ENCODE measurements at regions of chr6 and their contacts with region 1.

Region 1: GRCh38 chr6:25017932-25018567 is 82.3 kb upstream of the RIPOR2 start:
- DNase-seq: peak; percentile 65 to 90 (median 84)
- ATAC-seq: peak; percentile 87
- H3K4me3 ChIP-seq: no peak overlapping the region
- H3K4me3 Mint-ChIP-seq: no peak overlapping the region
- H3K27ac ChIP-seq: peak overlapping the region in 1 of 2 experiments; percentile 59
- H3K27ac Mint-ChIP-seq: peak overlapping the region; percentile 87
- H3K4me1 ChIP-seq: peaks cover 31% of the 10 kb centered on the region
- H3K4me1 Mint-ChIP-seq: peaks cover 38% of the 10 kb centered on the region
- H3K27me3 ChIP-seq: no peaks in the 10 kb centered on the region
- H3K27me3 Mint-ChIP-seq: no peaks in the 10 kb centered on the region
- CTCF ChIP-seq: peak; percentile 89

Region 2: GRCh38 chr6:24581084-24581669 is 436.9 kb before region 1 on chr6:
- CTCF ChIA-PET with region 1: interaction called, 27 read pairs
- POLR2A ChIA-PET with region 1: no interaction called
- intact Hi-C with region 1: loop called (anchors 1 kb)
- DNase-seq: peak; percentile 57 to 86 (median 80)
- ATAC-seq: peak; percentile 92
- H3K4me3 ChIP-seq: no peak overlapping the region
- H3K4me3 Mint-ChIP-seq: no peak overlapping the region
- H3K27ac ChIP-seq: no peak overlapping the region
- H3K27ac Mint-ChIP-seq: no peak overlapping the region
- H3K4me1 ChIP-seq: no peaks in the 10 kb centered on the region
- H3K4me1 Mint-ChIP-seq: peaks cover 4% of the 10 kb centered on the region
- H3K27me3 ChIP-seq: no peaks in the 10 kb centered on the region
- H3K27me3 Mint-ChIP-seq: no peaks in the 10 kb centered on the region
- CTCF ChIP-seq: peak; percentile 71

Region 3: GRCh38 chr6:24766680-24767462 is 251.2 kb before region 1 on chr6:
- CTCF ChIA-PET with region 1: interaction called, 5 read pairs
- POLR2A ChIA-PET with region 1: no interaction called
- intact Hi-C with region 1: loop called in 1 of 2 experiments (anchors 2 kb)
- DNase-seq: peak in 2 of 9 experiments; percentile 43 to 58
- ATAC-seq: peak; percentile 73
- H3K4me3 ChIP-seq: no peak overlapping the region
- H3K4me3 Mint-ChIP-seq: no peak overlapping the region
- H3K27ac ChIP-seq: no peak overlapping the region
- H3K27ac Mint-ChIP-seq: no peak overlapping the region
- H3K4me1 ChIP-seq: no peaks in the 10 kb centered on the region
- H3K4me1 Mint-ChIP-seq: peaks cover 4% of the 10 kb centered on the region
- H3K27me3 ChIP-seq: no peaks in the 10 kb centered on the region
- H3K27me3 Mint-ChIP-seq: no peaks in the 10 kb centered on the region
- CTCF ChIP-seq: peak; percentile 65

Region 4: GRCh38 chr6:24855395-24856245 is 162.4 kb before region 1 on chr6:
- CTCF ChIA-PET with region 1: interaction called, 119 read pairs
- POLR2A ChIA-PET with region 1: interaction called, 15 read pairs
- intact Hi-C with region 1: loop called (anchors 1 kb)
- DNase-seq: peak; percentile 39 to 90 (median 67)
- ATAC-seq: peak; percentile 69
- H3K4me3 ChIP-seq: no peak overlapping the region
- H3K4me3 Mint-ChIP-seq: peak overlapping the region; percentile 36
- H3K27ac ChIP-seq: peak overlapping the region in 1 of 2 experiments; percentile 52
- H3K27ac Mint-ChIP-seq: peak overlapping the region; percentile 96
- H3K4me1 ChIP-seq: peaks cover 53% of the 10 kb centered on the region
- H3K4me1 Mint-ChIP-seq: peaks cover 61% of the 10 kb centered on the region
- H3K27me3 ChIP-seq: no peaks in the 10 kb centered on the region
- H3K27me3 Mint-ChIP-seq: no peaks in the 10 kb centered on the region
- CTCF ChIP-seq: peak; percentile 77

Region 5: DNA sequence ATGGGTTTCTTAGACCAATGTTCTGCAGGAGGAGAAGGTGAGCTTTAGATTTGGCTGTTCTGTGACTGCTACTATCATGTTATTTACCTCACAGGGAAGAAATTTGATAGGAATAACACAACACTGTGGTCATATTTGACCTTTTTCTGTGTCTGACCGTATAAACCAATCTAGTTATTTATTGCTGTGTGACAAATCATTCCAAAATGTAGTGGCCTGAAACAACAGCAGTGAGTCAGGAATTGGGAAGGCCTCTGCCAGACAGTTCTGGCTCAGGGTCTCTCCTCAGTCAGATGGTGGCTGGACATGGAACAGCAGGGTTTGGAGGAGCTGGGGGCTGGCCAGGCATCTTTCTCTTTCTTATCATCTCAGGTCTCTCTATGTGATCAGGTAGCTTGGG is 115.3 kb before region 1 on chr6:
- CTCF ChIA-PET with region 1: interaction called, 13 read pairs
- POLR2A ChIA-PET with region 1: interaction called, 4 read pairs
- intact Hi-C with region 1: no loop called
- DNase-seq: no peak
- ATAC-seq: no peak
- H3K4me3 ChIP-seq: no peak overlapping the region
- H3K4me3 Mint-ChIP-seq: peak overlapping the region; percentile 44
- H3K27ac ChIP-seq: peak overlapping the region; percentile 12 to 63
- H3K27ac Mint-ChIP-seq: peak overlapping the region; percentile 94
- H3K4me1 ChIP-seq: peaks cover 97% of the 10 kb centered on the region
- H3K4me1 Mint-ChIP-seq: peaks cover 94% of the 10 kb centered on the region
- H3K27me3 ChIP-seq: no peaks in the 10 kb centered on the region
- H3K27me3 Mint-ChIP-seq: no peaks in the 10 kb centered on the region
- CTCF ChIP-seq: no peak

Region 6: DNA sequence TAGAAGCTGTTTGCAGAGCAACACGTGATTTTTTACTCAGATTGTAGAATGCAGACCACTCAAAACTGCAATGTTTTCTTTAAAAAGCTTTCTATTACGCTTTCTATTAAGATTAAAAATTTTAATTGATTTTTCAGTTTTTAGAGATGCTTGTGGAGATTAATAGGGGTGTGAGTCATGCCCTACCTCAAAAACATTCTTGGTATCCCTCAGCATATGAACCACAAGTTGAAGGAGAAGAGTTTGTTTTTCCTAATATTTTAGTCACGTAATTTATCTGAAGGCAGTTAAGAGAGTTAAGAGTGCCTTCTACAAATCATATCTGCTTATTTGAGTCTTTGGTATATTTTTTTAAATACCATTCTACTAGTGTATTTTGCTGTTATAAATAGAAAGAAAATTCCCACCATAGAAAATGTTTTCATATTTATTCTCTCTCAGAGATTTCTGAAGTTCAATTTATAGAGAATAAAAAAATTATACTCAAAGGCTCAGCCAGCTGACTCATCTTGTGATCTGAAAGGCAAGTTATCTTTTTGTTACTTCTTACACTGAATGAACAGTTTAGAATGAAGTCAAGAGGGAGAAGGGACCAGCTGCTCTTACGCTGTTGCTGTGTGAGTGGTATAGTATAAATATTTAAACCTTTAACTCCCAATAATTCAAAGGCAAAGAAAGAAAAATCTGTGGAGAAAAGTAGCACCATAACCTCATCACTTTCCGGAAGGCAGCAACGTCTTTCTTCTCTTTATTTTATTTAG is 89.9 kb before region 1 on chr6:
- CTCF ChIA-PET with region 1: interaction called, 85 read pairs
- POLR2A ChIA-PET with region 1: interaction called, 7 read pairs
- intact Hi-C with region 1: no loop called
- DNase-seq: peak in 1 of 9 experiments; percentile 51
- ATAC-seq: no peak
- H3K4me3 ChIP-seq: peak overlapping the region; percentile 38 to 89
- H3K4me3 Mint-ChIP-seq: peak overlapping the region; percentile 97
- H3K27ac ChIP-seq: peak overlapping the region; percentile 50 to 73
- H3K27ac Mint-ChIP-seq: peak overlapping the region; percentile 95
- H3K4me1 ChIP-seq: peaks cover 73% of the 10 kb centered on the region
- H3K4me1 Mint-ChIP-seq: peaks cover 82% of the 10 kb centered on the region
- H3K27me3 ChIP-seq: no peaks in the 10 kb centered on the region
- H3K27me3 Mint-ChIP-seq: no peaks in the 10 kb centered on the region
- CTCF ChIP-seq: no peak

Region 7: DNA sequence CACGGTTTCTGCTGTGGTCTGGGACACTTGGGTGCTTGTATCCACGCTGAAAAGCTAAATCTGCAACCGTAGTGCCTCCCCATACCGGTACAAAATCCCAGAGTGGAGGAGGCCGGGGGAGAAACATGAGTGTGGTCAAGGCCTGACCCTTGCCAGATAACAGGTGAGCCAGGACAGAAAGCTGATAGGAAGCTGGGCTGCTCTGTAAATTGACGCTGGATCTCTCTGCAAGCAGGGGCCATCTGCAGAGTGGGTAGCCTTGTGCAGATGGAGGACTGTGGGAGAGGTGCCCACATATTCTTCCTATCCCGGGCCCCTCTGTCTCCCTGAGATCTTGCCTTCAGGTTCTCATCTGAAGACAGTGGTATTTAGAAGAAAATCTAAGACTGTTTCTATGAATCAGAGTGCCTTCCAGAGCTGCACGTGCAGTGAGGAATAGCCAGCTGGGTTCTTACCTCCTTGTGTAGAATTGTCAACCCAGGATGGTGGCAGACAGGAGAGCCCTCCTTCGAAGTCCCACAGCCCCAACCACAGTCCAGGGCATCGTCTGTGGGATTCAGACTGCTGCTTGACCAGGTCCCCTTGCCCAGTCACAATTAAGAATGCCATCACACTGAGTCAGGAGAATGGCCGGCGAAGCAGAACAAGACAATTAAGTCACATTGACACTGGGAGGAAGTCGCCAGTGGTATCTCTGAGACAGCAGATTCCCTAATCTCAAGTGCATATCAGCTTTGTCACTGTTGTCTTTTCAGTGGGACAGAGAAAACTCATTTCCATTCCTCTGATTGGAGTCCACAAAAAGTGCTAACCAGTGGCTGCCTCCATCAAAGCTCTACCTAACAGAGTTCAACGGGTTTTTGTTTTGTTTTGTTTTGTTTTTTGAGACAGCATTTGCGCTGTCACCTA is 17.7 kb after region 1 on chr6:
- CTCF ChIA-PET with region 1: interaction called, 34 read pairs
- POLR2A ChIA-PET with region 1: interaction called, 3 read pairs
- intact Hi-C with region 1: no loop called
- DNase-seq: peak in 2 of 9 experiments; percentile 37 to 59
- ATAC-seq: peak; percentile 40
- H3K4me3 ChIP-seq: peak overlapping the region; percentile 30 to 44
- H3K4me3 Mint-ChIP-seq: peak overlapping the region; percentile 83
- H3K27ac ChIP-seq: peak overlapping the region; percentile 38 to 83
- H3K27ac Mint-ChIP-seq: peak overlapping the region; percentile 86
- H3K4me1 ChIP-seq: peaks cover 53% of the 10 kb centered on the region
- H3K4me1 Mint-ChIP-seq: peaks cover 67% of the 10 kb centered on the region
- H3K27me3 ChIP-seq: no peaks in the 10 kb centered on the region
- H3K27me3 Mint-ChIP-seq: no peaks in the 10 kb centered on the region
- CTCF ChIP-seq: no peak

Region 8: DNA sequence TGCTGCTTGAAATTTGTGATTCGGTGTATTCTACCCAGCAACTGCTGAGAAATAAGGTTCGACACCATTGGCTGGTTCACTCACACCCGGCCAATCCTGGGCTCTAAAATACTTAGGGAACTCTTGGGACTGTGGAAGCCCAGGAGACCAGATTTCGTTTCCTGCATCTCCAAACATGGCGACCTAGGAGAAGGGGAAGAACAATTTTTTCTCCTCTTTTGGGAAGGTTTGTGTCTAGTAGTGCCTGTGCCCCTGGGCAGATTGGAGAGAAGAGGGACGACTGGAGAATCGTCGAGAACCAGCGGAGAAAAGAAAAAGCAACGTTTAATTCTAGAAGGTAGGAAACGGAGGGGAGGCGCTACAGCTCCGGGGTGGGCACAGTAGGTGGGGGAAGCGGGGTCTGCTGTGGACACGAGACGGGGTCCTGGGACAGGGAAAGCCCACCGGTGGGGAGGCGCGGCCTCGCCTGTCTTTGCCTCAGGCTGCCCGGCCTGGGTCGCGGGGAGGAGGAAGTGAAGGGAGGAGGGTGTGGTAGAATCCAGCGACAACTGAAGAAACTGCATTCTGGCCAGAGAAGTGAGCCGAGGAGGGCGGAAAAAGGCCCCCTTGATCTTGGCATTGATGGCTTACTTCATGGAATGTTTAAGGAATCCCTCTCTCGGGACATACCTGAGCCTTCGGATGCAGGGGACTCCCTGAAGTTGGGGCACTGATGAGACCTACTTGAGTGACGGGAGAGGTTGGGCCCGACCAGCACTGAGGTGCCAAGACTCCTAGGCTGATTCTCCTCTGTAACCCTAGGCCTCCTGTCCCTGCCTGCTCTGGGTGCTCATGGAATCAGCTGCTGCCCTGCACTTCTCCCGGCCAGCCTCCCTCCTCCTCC is 1440.0 kb after region 1 on chr6 and contains the start of gene BTN2A1:
- CTCF ChIA-PET with region 1: no interaction called
- POLR2A ChIA-PET with region 1: no interaction called
- intact Hi-C with region 1: no loop called
- DNase-seq: peak; percentile 33 to 93 (median 65)
- ATAC-seq: peak; percentile 96
- H3K4me3 ChIP-seq: peak within 1 kb of the TSS; percentile 64 to 78
- H3K4me3 Mint-ChIP-seq: peak within 1 kb of the TSS; percentile 100
- H3K27ac ChIP-seq: peak within 1 kb of the TSS; percentile 61 to 92
- H3K27ac Mint-ChIP-seq: peak within 1 kb of the TSS; percentile 99
- H3K4me1 ChIP-seq: peaks cover 48% of the 10 kb centered on the region
- H3K4me1 Mint-ChIP-seq: peaks cover 68% of the 10 kb centered on the region
- H3K27me3 ChIP-seq: no peaks in the 10 kb centered on the region
- H3K27me3 Mint-ChIP-seq: no peaks in the 10 kb centered on the region
- CTCF ChIP-seq: no peak
- total RNA-seq, gene BTN2A1: 16.4 to 17.3 TPM

Measured in CD8-positive, alpha-beta T cell (primary cell).